Activated CD4-positive, alpha-beta memory T cell treated with anti-CD3 and anti-CD28 coated beads for 36 hours (primary cell): ENCODE measurements at regions of chr12 and their contacts with region 1.

Region 1: GRCh38 chr12:92049403-92049802 is 96.2 kb downstream of the BTG1 start:
- DNase-seq: no peak
- H3K4me3 Mint-ChIP-seq: no peak overlapping the region
- H3K27ac Mint-ChIP-seq: no peak overlapping the region
- H3K4me1 Mint-ChIP-seq: peaks cover 70% of the 10 kb centered on the region
- H3K27me3 Mint-ChIP-seq: no peaks in the 10 kb centered on the region

Region 2: GRCh38 chr12:92034858-92035401 is 14.5 kb before region 1 on chr12:
- CTCF ChIA-PET with region 1: no interaction called
- POLR2A ChIA-PET with region 1: interaction called, 4 read pairs
- intact Hi-C with region 1: loop called (anchors 1 kb)
- DNase-seq: peak; percentile 66
- H3K4me3 Mint-ChIP-seq: peak overlapping the region; percentile 84
- H3K27ac Mint-ChIP-seq: peak overlapping the region; percentile 78
- H3K4me1 Mint-ChIP-seq: peaks cover 83% of the 10 kb centered on the region
- H3K27me3 Mint-ChIP-seq: no peaks in the 10 kb centered on the region

Region 3: DNA sequence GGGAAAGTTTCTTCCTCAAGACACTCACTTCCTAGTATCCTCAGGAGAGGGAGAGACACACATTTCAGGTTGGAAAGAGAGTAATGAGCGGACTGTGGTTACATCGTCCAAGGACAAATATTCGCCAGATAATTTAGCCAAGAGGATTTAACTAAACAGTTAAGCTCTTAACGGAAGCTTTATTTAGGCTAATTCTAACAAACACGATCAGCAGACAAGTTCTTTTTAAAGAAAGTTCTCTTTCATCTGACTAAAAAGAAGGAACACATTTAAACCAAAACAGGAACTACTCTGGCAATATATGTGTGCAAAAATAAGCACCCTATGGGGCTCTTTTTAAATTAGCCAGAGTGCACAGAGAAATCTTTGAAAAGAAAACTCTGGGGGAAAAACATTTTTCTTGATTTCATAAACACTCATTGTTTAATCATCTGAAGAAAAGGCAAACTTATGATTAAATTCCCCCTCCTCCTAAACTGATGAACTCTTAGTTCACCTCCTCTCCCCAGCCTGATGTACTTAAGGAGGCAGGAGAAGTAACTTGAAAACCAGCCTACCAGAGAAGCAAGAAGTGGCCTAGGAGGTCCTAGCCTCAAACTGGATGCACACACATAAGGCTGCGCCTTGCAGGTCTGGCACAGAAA is 109.5 kb after region 1 on chr12:
- CTCF ChIA-PET with region 1: no interaction called
- POLR2A ChIA-PET with region 1: no interaction called
- intact Hi-C with region 1: no loop called
- DNase-seq: no peak
- H3K4me3 Mint-ChIP-seq: peak overlapping the region; percentile 1
- H3K27ac Mint-ChIP-seq: peak overlapping the region; percentile 64
- H3K4me1 Mint-ChIP-seq: peaks cover 39% of the 10 kb centered on the region
- H3K27me3 Mint-ChIP-seq: no peaks in the 10 kb centered on the region

Region 4: DNA sequence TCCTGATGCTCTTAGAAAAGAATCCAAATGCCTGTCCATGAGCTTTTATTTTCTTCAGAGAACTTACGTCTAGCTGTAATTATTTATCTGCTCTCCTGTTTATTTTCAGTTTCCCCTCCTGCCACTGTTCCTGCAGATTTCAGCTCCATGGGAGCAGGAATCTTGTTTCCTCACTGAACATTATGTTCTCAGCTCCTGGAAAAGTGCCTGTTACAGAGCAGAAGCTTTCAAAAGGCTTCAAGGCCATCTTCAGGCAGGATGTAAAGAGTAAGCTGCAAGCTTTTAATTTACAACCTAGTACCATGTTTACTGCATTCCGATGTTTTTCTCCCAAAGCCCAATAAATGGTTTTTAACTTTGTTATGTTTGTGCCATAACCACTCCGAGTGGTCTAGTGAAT is 194.6 kb after region 1 on chr12:
- CTCF ChIA-PET with region 1: no interaction called
- POLR2A ChIA-PET with region 1: no interaction called
- intact Hi-C with region 1: no loop called
- DNase-seq: no peak
- H3K4me3 Mint-ChIP-seq: no peak overlapping the region
- H3K27ac Mint-ChIP-seq: no peak overlapping the region
- H3K4me1 Mint-ChIP-seq: no peaks in the 10 kb centered on the region
- H3K27me3 Mint-ChIP-seq: no peaks in the 10 kb centered on the region